ENCODE measurements at regions of chr7 and their contacts with region 1.

Region 1: DNA sequence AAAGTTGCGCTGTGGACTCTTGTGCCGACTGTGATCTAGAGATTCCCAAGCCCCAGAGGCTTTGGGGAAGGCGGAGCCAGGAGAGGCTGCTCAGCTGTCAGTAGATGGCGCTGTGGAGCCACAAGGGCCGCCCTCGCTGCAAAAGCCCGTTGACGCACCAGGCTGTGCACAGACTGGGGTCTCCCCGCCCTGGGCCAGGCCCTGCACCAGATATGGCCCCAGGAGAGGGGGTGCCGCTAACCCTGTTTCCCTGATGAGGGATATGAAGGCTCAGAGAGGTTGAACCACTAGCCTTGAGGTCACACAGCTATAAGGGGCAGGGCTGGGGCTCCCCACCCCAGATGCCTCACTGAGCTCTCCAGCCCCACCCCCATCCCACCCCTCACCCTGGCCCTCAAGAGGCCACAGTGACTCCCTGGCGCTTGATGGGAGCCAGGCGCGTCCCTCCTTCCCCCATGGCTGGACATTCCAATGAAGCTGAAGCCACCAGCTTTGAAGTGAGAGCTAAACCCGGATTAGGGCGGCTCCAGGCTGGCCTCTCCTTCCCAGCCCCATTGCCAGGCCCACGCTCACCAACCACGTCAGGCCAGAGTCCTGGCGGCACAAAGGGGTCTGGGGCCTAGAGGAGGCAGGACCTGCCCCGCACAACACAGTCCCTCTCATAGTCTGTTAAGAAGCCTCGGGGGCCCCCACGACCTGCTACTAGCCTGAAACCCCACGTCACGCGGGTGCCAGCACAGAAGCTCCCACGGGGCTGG is 26.4 kb downstream of the MYL10 start:
- DNase-seq: peak; percentile 0
- ATAC-seq: peak; percentile 99
- H3K4me3 ChIP-seq: no peak overlapping the region
- H3K27ac ChIP-seq: no peak overlapping the region
- H3K4me1 ChIP-seq: no peaks in the 10 kb centered on the region
- H3K27me3 ChIP-seq: no peaks in the 10 kb centered on the region; a peak in 1 of 4 replicates
- CTCF ChIP-seq: peak; percentile 82 to 92 (median 91)
- EP300 ChIP-seq: no peak
- POLR2A ChIP-seq: no peak
- RAD21 ChIP-seq: peak; percentile 77

Region 2: DNA sequence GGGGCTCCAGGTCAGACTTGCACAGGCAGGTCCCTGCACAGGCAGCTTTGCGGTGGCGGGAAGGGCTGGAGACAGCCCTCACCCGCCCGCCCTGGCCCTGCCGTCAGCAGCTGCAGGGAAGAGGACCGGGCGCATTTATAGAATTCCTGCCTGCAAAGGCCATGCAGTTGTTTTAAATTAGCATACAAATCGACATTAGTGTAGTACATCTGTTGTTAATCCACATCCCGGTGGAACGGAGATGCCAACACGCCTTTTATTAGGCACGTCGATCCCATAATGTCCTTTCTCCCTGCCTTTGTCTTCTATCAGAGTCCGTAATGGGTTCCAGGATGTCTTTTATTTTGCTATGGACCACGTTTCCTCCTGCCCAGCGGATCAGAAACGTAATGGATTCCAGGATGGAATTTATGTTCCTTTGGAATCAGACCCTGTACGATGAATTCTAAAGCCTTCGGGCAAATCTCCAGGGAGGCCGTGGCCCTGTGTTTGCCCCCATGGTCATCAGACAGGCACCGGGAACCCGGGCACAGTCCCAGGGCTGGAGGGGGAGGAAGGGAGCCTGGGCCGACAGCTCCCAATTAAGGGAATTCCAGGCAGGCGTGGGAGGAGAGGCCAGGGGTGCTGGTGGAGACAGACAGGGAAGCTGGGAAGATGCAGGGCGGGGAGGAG is 116.1 kb before region 1 on chr7:
- CTCF ChIA-PET with region 1: no interaction called
- POLR2A ChIA-PET with region 1: no interaction called
- RAD21 ChIA-PET with region 1: no interaction called
- SMC1A ChIA-PET with region 1: no interaction called
- in situ Hi-C with region 1: no loop called
- intact Hi-C with region 1: no loop called
- DNase-seq: no peak
- ATAC-seq: no peak
- H3K4me3 ChIP-seq: no peak overlapping the region
- H3K27ac ChIP-seq: no peak overlapping the region
- H3K4me1 ChIP-seq: no peaks in the 10 kb centered on the region
- H3K27me3 ChIP-seq: no peaks in the 10 kb centered on the region
- CTCF ChIP-seq: no peak
- EP300 ChIP-seq: no peak
- POLR2A ChIP-seq: no peak
- RAD21 ChIP-seq: no peak

Region 3: GRCh38 chr7:102008535-102009345 is 406.1 kb after region 1 on chr7:
- CTCF ChIA-PET with region 1: no interaction called
- POLR2A ChIA-PET with region 1: no interaction called
- RAD21 ChIA-PET with region 1: no interaction called
- SMC1A ChIA-PET with region 1: no interaction called
- in situ Hi-C with region 1: no loop called
- intact Hi-C with region 1: no loop called
- DNase-seq: no peak
- ATAC-seq: no peak
- H3K4me3 ChIP-seq: no peak overlapping the region
- H3K27ac ChIP-seq: no peak overlapping the region
- H3K4me1 ChIP-seq: no peaks in the 10 kb centered on the region
- H3K27me3 ChIP-seq: no peaks in the 10 kb centered on the region
- CTCF ChIP-seq: no peak
- EP300 ChIP-seq: no peak
- POLR2A ChIP-seq: no peak
- RAD21 ChIP-seq: no peak

Region 4: DNA sequence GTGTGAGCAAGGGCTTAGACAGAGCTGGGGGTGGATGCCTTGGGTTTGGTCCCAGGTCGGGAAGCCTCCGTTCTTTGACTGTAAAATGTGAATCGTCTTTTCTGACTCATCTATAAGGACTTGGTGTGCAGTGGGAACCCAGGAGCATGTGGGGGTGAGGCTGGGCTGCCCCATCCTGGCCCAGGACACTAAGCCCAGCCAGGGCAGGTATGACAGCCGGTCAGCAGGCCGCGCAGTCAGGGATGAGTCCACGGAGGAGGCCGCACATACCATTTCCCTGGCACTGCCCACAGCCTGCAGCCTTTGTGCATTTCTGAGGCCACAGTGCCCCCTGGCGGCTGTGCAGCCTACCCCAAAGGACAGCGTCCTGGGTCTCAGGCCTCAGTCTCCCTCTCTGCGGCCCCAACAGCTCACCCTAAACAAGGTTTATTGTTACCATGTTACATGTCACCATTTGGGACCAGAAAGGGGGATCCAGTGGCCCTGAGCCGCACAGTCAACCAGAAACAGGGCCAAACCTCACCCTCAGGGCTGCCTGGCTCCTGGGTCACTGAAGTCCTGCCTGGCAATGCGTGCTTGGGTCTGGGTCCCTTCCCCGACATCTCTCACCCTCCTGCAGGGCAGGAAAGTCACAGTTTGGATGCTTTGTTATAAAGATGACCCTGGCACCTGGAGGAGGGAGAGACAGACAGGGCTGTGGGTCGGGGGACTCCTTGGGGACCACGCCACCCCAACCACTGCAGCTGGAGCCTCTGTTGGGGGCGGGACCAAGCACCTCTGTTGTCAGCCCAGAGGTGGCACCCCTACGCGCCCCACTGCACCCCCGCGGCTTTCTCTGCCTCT is 669.6 kb after region 1 on chr7:
- CTCF ChIA-PET with region 1: interaction called, 35 read pairs
- POLR2A ChIA-PET with region 1: no interaction called
- RAD21 ChIA-PET with region 1: interaction called, 8 read pairs
- SMC1A ChIA-PET with region 1: no interaction called
- in situ Hi-C with region 1: loop called (anchors 5 kb)
- intact Hi-C with region 1: loop called (anchors 1 kb)
- DNase-seq: no peak
- ATAC-seq: peak; percentile 98
- H3K4me3 ChIP-seq: no peak overlapping the region
- H3K27ac ChIP-seq: no peak overlapping the region
- H3K4me1 ChIP-seq: no peaks in the 10 kb centered on the region
- H3K27me3 ChIP-seq: no peaks in the 10 kb centered on the region; a peak in 1 of 4 replicates
- CTCF ChIP-seq: peak; percentile 92 to 97 (median 95); a peak in 5 of 6 replicates
- EP300 ChIP-seq: no peak
- POLR2A ChIP-seq: no peak
- RAD21 ChIP-seq: peak; percentile 96

Region 5: GRCh38 chr7:102390697-102391484 is 788.2 kb after region 1 on chr7:
- CTCF ChIA-PET with region 1: interaction called, 3 read pairs
- POLR2A ChIA-PET with region 1: no interaction called
- RAD21 ChIA-PET with region 1: no interaction called
- SMC1A ChIA-PET with region 1: no interaction called
- in situ Hi-C with region 1: loop called (anchors 10 kb)
- intact Hi-C with region 1: no loop called
- DNase-seq: no peak
- ATAC-seq: peak; percentile 92
- H3K4me3 ChIP-seq: no peak overlapping the region
- H3K27ac ChIP-seq: no peak overlapping the region
- H3K4me1 ChIP-seq: peaks cover 16% of the 10 kb centered on the region
- H3K27me3 ChIP-seq: no peaks in the 10 kb centered on the region
- CTCF ChIP-seq: peak; percentile 89 to 93 (median 91)
- EP300 ChIP-seq: no peak
- POLR2A ChIP-seq: no peak; the same call in 1 of the 2 replicates
- RAD21 ChIP-seq: peak; percentile 91